Dendritic cell treated with granulocyte-macrophage colony-stimulating factor and Interleukin-4, amounts not matched to agents 40 ng/mL and 50 ng/mL, for 4 days (primary cell): ENCODE measurements at regions of chr17 and their contacts with region 1.

Region 1: GRCh38 chr17:74089869-74090464 is 113.5 kb upstream of the RPL38 start:
- H3K4me3 Mint-ChIP-seq: no peak overlapping the region
- H3K27ac Mint-ChIP-seq: no peak overlapping the region
- H3K4me1 Mint-ChIP-seq: no peaks in the 10 kb centered on the region
- H3K27me3 Mint-ChIP-seq: peaks cover 8% of the 10 kb centered on the region

Region 2: GRCh38 chr17:74045571-74046280 is 44.2 kb before region 1 on chr17:
- intact Hi-C with region 1: no loop called
- H3K4me3 Mint-ChIP-seq: no peak overlapping the region
- H3K27ac Mint-ChIP-seq: no peak overlapping the region
- H3K4me1 Mint-ChIP-seq: no peaks in the 10 kb centered on the region
- H3K27me3 Mint-ChIP-seq: peaks cover 6% of the 10 kb centered on the region

Region 3: DNA sequence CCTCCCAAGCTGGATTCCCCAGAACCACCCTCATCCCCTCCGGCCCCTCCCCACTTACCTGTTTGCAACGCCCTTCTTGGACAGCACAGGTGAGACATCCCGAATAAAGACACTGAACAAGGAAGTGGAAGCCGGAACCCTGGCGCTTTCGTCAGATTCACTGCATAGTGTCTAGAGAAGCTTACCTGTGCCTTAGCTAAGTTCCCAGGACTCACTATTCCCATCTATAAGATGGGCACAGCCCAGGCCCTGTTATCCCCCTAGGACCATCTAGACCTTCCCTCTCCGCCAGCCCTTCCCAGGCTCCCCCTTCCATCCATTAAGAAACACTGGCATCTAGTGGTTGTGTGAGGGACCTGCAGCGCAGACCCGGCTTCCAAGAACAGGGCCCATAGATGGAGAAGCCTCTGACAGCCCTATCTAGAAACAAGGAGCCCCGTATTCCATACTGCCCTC is 86.6 kb after region 1 on chr17:
- intact Hi-C with region 1: loop called (anchors 1 kb)
- H3K4me3 Mint-ChIP-seq: no peak overlapping the region
- H3K27ac Mint-ChIP-seq: no peak overlapping the region
- H3K4me1 Mint-ChIP-seq: peaks cover 10% of the 10 kb centered on the region
- H3K27me3 Mint-ChIP-seq: peaks cover 37% of the 10 kb centered on the region

Region 4: DNA sequence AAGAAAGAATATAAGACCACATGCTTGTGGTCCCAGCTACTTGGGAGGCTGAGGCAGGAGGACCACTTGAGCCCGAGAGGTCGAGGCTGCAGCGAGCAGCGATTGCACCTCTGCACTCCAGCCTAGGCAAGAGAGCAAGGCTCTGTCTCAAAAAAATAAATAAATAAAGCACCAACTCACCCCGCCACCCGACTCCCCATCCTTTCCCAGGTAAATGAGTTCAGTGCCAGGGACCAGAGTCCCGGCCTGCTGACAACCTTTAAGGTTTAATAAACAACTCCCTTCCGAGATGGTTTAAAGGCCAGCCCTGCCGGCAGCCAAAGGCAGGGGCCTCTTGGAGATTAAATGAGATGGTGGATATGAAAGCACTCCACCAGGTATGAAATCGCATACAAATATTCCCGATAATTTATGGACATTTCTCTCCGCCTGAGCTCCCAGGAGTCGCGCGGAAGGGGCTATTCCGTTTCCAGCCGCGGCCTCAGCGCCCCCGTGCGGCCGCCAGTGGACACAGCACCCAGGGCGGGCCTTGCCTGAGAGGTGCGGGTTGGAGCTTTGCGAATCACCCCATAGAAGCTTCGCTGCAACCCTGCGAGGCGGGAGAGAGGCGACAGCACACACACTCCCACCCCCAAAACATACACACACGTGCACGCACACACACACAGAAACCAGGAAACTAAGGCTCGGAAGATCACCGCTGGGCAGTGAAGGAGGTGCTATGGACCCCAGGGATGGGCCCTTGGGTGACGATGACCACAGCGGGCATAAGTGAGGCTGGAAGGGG is 109.5 kb after region 1 on chr17:
- intact Hi-C with region 1: loop called (anchors 2 kb)
- H3K4me3 Mint-ChIP-seq: no peak overlapping the region
- H3K27ac Mint-ChIP-seq: peak overlapping the region; percentile 59
- H3K4me1 Mint-ChIP-seq: peaks cover 30% of the 10 kb centered on the region
- H3K27me3 Mint-ChIP-seq: peaks cover 55% of the 10 kb centered on the region

Region 5: DNA sequence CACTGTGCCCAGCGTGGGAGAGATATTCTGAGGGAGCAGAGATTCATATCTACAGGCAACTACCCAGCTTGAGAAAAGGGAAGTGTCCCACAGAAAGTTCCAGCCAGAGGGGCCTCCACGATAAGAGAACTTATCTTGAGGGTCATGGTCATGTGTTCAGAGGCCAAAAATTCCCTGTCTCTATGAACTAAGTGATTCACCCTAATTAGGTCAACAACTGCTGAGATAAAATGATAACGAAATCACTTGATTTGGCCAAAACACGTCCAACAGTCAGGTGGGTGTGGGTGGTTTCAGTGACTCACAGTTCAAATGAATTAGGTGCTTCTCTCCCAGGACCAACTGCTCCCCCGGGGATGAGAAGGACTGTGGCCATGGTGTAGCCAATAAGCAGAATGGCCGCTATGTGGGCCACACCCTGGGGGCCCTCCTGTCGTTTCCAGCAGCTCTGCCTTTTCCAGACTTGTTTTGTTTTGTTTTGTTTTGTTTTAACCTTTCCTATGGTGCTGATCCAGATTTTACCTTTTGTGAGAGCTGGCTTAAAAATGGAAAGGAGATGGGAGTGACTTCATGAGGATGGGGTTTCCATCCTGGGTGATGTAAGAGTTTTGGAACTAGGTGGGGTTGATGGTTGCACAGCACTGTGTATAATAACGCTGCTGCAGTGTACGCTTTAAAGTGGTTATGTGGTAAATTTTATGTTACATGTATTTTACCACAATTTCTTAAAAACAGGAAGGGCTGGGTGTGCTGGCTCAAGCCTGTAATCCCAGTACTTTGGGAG is 192.8 kb after region 1 on chr17:
- intact Hi-C with region 1: no loop called
- H3K4me3 Mint-ChIP-seq: no peak overlapping the region
- H3K27ac Mint-ChIP-seq: peak overlapping the region; percentile 83
- H3K4me1 Mint-ChIP-seq: peaks cover 46% of the 10 kb centered on the region
- H3K27me3 Mint-ChIP-seq: peaks cover 10% of the 10 kb centered on the region